ENCODE measurements at regions of chr13 and their contacts with region 1.

Region 1: DNA sequence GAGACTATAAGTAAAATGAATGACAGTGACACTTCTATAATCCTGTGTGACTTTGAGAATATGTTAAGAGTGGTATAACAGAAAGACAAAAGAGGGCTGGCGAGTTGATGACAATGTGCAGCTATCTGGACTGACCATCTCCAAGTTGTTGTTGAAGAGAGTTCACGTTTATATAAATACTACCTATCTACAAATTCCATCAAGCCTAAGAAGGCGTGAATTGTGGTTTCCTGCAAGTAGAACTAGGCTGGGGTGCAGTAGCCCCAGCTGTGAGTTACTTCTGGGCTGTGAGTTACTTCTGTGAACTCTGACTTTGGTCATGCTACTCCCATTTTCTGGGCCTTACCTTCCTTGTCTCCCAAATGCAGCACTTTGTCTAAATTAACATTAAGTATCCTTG is 561.0 kb downstream of the TBC1D4 start:
- DNase-seq: no peak
- ATAC-seq: no peak
- H3K4me3 Mint-ChIP-seq: no peak overlapping the region
- H3K27ac Mint-ChIP-seq: no peak overlapping the region
- H3K4me1 Mint-ChIP-seq: no peaks in the 10 kb centered on the region
- H3K27me3 Mint-ChIP-seq: no peaks in the 10 kb centered on the region

Region 2: GRCh38 chr13:74966814-74967424 is 46.0 kb after region 1 on chr13:
- CTCF ChIA-PET with region 1: no interaction called
- POLR2A ChIA-PET with region 1: interaction called, 11 read pairs
- intact Hi-C with region 1: no loop called
- DNase-seq: no peak
- ATAC-seq: no peak
- H3K4me3 Mint-ChIP-seq: no peak overlapping the region
- H3K27ac Mint-ChIP-seq: no peak overlapping the region
- H3K4me1 Mint-ChIP-seq: no peaks in the 10 kb centered on the region
- H3K27me3 Mint-ChIP-seq: peaks cover 8% of the 10 kb centered on the region